ENCODE measurements at regions of chr2 and their contacts with region 1.

Region 1: GRCh38 chr2:3728104-3729054 is 25.0 kb downstream of the DCDC2C start:
- DNase-seq: peak; percentile 77
- H3K4me3 ChIP-seq: peak overlapping the region in 1 of 2 experiments; percentile 2; a peak in 1 of 4 replicates
- H3K27ac ChIP-seq: no peak overlapping the region
- H3K4me1 ChIP-seq: peaks cover 0 to 6% of the 10 kb centered on the region in 2 experiments; a peak in 1 of 4 replicates
- H3K27me3 ChIP-seq: no peaks in the 10 kb centered on the region
- CTCF ChIP-seq: peak; percentile 71
- EP300 ChIP-seq: no peak
- RAD21 ChIP-seq: peak; percentile 83

Region 2: GRCh38 chr2:3706892-3707291 is 21.5 kb before region 1 on chr2:
- CTCF ChIA-PET with region 1: interaction called, 42 read pairs
- POLR2A ChIA-PET with region 1: no interaction called
- DNase-seq: no peak
- H3K4me3 ChIP-seq: no peak overlapping the region
- H3K27ac ChIP-seq: no peak overlapping the region
- H3K4me1 ChIP-seq: peaks cover 5 to 6% of the 10 kb centered on the region in 2 experiments; a peak in 2 of 4 replicates
- H3K27me3 ChIP-seq: no peaks in the 10 kb centered on the region
- CTCF ChIP-seq: no peak
- EP300 ChIP-seq: no peak
- RAD21 ChIP-seq: no peak

Region 3: DNA sequence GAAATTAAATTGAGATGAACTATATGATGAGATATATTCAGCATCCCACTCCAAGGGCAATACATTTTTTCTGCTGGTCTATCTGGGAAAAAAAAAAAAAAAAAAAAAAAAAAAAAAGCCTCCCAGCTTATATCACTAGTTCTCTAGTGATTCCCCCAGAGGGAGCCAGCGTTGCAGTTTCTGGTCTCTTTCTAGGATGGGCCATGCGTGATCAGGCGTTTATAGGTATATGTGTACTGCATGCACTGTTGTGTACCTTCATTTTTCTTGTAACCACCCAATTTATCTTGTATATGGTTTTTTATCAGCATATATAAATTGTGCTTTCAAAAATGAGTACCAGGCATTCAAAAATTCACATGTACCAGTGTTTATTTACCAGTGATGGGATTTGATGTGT is 10.1 kb after region 1 on chr2:
- CTCF ChIA-PET with region 1: interaction called, 45 read pairs
- POLR2A ChIA-PET with region 1: no interaction called
- DNase-seq: peak; percentile 72
- H3K4me3 ChIP-seq: no peak overlapping the region
- H3K27ac ChIP-seq: no peak overlapping the region
- H3K4me1 ChIP-seq: no peaks in the 10 kb centered on the region
- H3K27me3 ChIP-seq: no peaks in the 10 kb centered on the region
- CTCF ChIP-seq: peak; percentile 30; the same call in 1 of the 2 replicates
- EP300 ChIP-seq: no peak
- RAD21 ChIP-seq: peak; percentile 58

Region 4: DNA sequence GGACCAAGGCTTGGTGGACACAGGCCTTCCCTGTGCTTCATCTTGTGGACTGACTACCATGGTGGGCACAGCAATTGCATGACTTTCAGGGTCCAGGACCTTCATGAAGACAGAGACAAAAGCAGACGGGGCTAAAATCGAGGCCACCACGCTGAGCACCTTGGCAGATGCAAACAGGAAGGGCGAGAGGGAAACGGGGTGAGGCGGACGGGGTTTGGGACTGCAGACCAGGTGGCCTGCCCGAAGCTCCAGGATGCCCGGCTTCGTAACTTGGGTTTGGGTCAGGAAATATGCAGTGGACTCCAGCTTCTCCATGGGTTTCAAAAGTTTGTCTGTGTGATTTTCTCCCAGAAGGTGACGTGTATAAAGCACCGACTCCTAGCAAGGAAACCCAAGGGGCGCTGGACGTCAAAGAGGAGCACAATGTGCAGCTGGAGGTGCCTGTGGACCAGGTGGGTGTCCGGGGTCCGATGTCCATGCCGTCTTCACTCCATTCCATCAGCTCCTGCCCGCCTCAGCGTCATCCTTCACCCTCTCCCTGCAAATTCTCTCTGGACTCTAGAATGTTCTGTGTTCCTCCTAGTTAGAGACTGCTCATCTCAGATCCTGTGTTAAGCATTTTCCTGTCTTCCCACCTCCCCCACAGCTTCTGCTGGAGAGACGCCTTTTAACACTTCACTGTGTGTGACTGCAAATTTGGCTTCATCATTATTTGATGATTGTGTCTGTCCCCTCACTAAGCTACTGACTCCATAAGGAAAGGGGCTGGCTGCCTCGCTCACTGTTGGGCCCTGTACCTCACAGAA is 40.8 kb after region 1 on chr2:
- CTCF ChIA-PET with region 1: interaction called, 218 read pairs
- POLR2A ChIA-PET with region 1: no interaction called
- DNase-seq: no peak
- H3K4me3 ChIP-seq: no peak overlapping the region
- H3K27ac ChIP-seq: no peak overlapping the region
- H3K4me1 ChIP-seq: no peaks in the 10 kb centered on the region
- H3K27me3 ChIP-seq: no peaks in the 10 kb centered on the region
- CTCF ChIP-seq: no peak
- EP300 ChIP-seq: no peak
- RAD21 ChIP-seq: no peak

Region 5: DNA sequence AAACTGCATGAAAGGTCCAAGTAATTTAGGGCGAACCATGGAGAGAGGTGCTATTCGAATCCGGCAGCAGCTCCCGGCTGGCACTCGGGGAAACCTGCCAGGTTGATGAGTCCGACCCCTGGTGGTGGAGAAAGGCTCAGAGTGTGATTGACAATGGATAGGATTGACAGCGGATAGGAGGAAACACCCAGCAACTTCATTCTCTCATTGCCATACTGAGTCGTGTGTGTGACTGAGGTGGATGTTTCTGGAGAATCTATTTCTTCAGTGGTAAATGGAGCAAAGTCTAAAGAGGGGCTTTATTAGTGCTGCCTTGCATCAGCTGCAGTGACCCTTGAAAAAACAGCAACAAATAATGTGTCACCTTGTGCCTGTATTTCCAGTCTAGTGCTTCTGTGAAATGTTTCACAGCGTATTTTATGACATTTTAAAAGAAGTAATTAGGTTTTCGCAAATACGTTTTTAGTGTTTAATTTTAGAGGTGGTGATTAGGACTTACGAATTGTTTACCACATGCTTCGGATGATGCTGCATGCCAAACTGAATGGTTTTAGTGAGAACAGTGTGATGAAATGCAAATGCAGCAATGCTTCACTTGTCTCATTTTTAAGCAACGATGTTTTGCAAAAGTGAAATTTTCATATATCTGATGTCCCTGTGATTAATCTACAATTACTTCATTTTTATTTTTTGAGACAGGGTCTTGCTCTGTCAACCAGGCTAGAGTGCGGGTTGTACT is 77.0 kb after region 1 on chr2:
- CTCF ChIA-PET with region 1: interaction called, 106 read pairs
- POLR2A ChIA-PET with region 1: no interaction called
- DNase-seq: peak; percentile 75
- H3K4me3 ChIP-seq: peak overlapping the region in 1 of 2 experiments; percentile 4; a peak in 1 of 4 replicates
- H3K27ac ChIP-seq: no peak overlapping the region
- H3K4me1 ChIP-seq: no peaks in the 10 kb centered on the region; a peak in 1 of 4 replicates
- H3K27me3 ChIP-seq: no peaks in the 10 kb centered on the region
- CTCF ChIP-seq: peak; percentile 14; the same call in 1 of the 2 replicates
- EP300 ChIP-seq: no peak
- RAD21 ChIP-seq: peak; percentile 56

Measured in SK-N-SH (cell line).